ENCODE measurements at regions of chr5 and their contacts with region 1.

Region 1: DNA sequence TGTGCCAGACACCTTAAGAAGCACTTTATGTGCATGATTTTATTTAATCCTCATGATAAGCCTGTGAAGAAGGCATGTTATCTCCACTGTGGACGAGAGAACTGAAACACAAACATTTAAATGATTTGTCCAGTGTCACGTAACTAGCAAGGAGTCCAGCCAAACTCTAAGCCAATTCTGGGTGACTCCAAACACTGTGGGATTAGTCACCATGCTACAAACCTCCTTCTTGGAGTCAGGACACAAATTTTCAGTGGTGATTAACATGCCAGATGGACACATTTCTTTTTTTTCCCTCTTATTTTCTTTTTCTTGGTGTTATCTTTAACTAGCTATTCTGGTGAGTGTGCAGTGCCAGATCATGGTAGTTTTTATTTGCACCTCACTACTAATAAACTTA is 316.8 kb downstream of the NDUFS4 start:
- DNase-seq: no peak
- ATAC-seq: no peak

Region 2: GRCh38 chr5:53126514-53126913 is 750.7 kb before region 1 on chr5:
- intact Hi-C with region 1: no loop called
- DNase-seq: no peak
- ATAC-seq: no peak

Region 3: DNA sequence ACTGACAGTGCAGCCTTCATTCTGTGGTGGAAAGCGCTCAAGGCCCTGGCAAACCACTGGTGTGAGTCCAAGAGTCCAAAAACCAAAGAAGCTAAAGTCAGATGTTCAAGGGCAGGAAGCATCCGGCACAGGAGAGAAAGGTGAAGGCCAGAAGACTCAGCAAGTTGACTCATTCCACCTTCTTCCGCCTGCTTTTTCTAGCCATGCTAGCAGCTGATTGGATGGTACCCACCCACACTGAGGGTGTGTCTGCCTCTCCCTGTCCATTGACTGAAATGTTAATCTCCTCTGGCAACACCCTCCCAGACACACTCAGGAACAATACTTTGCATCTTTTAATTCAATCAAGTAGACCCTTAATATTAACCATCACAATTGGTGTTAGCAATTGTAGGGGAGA is 20.7 kb before region 1 on chr5:
- intact Hi-C with region 1: loop called (anchors 2 kb)
- DNase-seq: no peak
- ATAC-seq: no peak